Activated CD4-positive, alpha-beta memory T cell treated with anti-CD3 and anti-CD28 coated beads for 36 hours (primary cell): ENCODE measurements at regions of chr2 and their contacts with region 1.

Region 1: DNA sequence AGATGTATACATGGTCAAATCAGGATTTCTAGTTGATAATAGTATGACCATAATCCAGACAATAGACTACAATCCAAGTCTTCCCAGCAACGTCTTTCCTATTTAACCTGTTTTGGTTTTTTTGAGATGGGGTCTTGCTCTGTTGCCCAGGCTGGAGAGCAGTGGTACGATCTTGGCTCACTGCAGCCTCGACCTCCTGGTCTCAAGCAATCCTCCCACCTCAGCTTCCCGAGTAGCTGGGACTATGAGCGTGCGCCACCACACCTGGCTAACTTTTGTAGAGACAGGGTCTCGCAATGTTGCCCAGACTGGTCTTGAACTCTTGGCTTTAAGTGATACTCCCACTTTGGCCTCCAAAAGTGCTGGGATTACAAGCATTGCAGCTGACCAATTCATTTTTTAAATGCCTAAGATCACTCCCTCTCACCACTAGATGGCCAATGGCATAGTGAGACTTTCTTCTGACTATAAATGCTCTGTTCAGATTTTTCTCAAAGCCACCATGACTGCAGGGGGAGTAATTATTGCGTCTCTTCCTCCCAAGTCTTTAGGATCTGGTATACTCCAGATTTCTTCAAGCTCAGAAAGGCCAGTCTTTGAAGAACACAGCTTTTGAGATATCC is 47.6 kb downstream of the HNRNPLL start:
- DNase-seq: no peak
- H3K4me3 Mint-ChIP-seq: no peak overlapping the region
- H3K27ac Mint-ChIP-seq: no peak overlapping the region
- H3K4me1 Mint-ChIP-seq: peaks cover 15% of the 10 kb centered on the region
- H3K27me3 Mint-ChIP-seq: no peaks in the 10 kb centered on the region

Region 2: GRCh38 chr2:37896314-37896713 is 658.8 kb before region 1 on chr2:
- CTCF ChIA-PET with region 1: no interaction called
- POLR2A ChIA-PET with region 1: no interaction called
- intact Hi-C with region 1: no loop called
- DNase-seq: no peak
- H3K4me3 Mint-ChIP-seq: no peak overlapping the region
- H3K27ac Mint-ChIP-seq: no peak overlapping the region
- H3K4me1 Mint-ChIP-seq: peaks cover 35% of the 10 kb centered on the region
- H3K27me3 Mint-ChIP-seq: no peaks in the 10 kb centered on the region

Region 3: GRCh38 chr2:38037757-38038621 is 517.1 kb before region 1 on chr2:
- CTCF ChIA-PET with region 1: no interaction called
- POLR2A ChIA-PET with region 1: no interaction called
- intact Hi-C with region 1: no loop called
- DNase-seq: peak; percentile 70
- H3K4me3 Mint-ChIP-seq: peak overlapping the region; percentile 59
- H3K27ac Mint-ChIP-seq: peak overlapping the region; percentile 80
- H3K4me1 Mint-ChIP-seq: peaks cover 29% of the 10 kb centered on the region
- H3K27me3 Mint-ChIP-seq: peaks cover 49% of the 10 kb centered on the region

Region 4: GRCh38 chr2:38572167-38572566 is 17.1 kb after region 1 on chr2:
- CTCF ChIA-PET with region 1: interaction called, 6 read pairs
- POLR2A ChIA-PET with region 1: interaction called, 3 read pairs
- intact Hi-C with region 1: loop called (anchors 2 kb)
- DNase-seq: peak; percentile 68
- H3K4me3 Mint-ChIP-seq: peak overlapping the region; percentile 1
- H3K27ac Mint-ChIP-seq: peak overlapping the region; percentile 61
- H3K4me1 Mint-ChIP-seq: peaks cover 60% of the 10 kb centered on the region
- H3K27me3 Mint-ChIP-seq: no peaks in the 10 kb centered on the region